ENCODE measurements at regions of chr21 and their contacts with region 1.

Region 1: GRCh38 chr21:42939582-42940410 is 14.4 kb upstream of the ERVH48-1 start:
- DNase-seq: no peak
- H3K4me3 ChIP-seq: no peak overlapping the region
- H3K27ac ChIP-seq: no peak overlapping the region
- H3K4me1 ChIP-seq: peaks cover 0 to 25% (median 12%) of the 10 kb centered on the region in 4 experiments; a peak in 6 of 7 replicates
- H3K27me3 ChIP-seq: no peaks in the 10 kb centered on the region
- CTCF ChIP-seq: no peak
- EP300 ChIP-seq: no peak
- POLR2A ChIP-seq: no peak
- RAD21 ChIP-seq: no peak

Region 2: DNA sequence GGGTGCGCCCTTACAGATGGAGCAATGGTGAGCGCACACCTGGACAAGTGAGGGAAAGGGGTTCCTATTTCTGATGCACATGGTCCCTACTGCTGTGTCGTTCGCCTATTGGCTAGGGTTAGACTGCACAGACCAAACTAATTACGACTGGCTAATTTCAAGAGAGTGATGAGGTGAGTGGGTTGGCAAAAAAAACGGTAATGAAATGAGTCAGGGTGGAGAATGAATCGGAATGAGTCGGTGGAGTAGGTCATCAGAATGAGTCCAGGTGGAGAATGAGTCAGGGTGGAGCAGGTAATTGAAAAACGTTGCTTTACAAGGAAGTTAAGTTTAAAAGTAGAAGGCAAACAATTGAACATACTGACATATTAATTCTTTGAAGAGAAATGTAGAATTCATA is 140.3 kb before region 1 on chr21:
- CTCF ChIA-PET with region 1: no interaction called
- POLR2A ChIA-PET with region 1: no interaction called
- DNase-seq: peak in 1 of 2 experiments; percentile 35
- H3K4me3 ChIP-seq: no peak overlapping the region
- H3K27ac ChIP-seq: no peak overlapping the region
- H3K4me1 ChIP-seq: peaks cover 0 to 5% (median 2%) of the 10 kb centered on the region in 4 experiments; a peak in 4 of 7 replicates
- H3K27me3 ChIP-seq: no peaks in the 10 kb centered on the region; a peak in 1 of 7 replicates
- CTCF ChIP-seq: no peak
- EP300 ChIP-seq: no peak
- POLR2A ChIP-seq: no peak
- RAD21 ChIP-seq: no peak

Region 3: DNA sequence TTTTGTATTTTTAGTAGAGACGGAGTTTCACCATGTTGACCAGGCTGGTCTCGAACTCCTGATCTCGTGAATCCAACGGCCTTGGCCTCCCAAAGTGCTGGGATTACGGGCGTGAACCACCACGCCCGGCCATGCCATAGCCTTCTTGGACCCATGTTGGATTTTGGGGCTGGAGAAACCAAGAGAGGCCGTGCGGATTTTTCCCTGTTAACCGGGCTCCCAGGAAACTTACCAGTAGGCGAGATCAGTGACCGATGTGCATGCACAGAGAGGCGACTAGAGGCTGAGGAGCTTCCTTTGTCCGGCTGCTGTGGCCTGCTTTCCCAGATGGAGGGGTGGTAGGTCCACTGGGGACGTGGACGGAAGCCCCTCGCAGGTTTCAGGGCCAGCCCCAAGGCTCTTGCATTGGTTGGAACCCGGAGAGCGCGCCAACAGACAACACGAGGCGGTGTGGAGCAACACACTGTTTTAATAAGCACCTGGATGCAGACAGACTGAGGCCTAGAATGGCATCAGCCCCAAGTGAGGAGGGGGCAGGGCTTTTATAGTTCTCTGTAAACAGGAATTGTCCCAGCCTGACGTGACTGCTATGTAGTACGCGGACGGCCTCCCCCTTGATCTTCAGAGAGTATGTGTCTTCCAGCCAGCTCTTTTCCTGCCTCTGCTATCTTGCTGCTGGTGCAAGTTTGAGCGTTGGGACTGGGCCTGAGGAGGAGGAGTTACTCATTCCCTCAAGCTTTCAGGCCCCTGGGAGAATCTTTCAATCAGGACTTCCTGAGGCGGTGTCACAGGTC is 14.5 kb before region 1 on chr21 and contains the start of gene ERVH48-1:
- CTCF ChIA-PET with region 1: interaction called, 10 read pairs
- POLR2A ChIA-PET with region 1: interaction called, 12 read pairs
- DNase-seq: no peak
- H3K4me3 ChIP-seq: peak within 1 kb of the TSS in 2 of 4 experiments; percentile 15 to 19; a peak in 3 of 8 replicates
- H3K27ac ChIP-seq: peak within 1 kb of the TSS; percentile 62; the same call in 1 of the 2 replicates
- H3K4me1 ChIP-seq: peaks cover 11 to 18% (median 14%) of the 10 kb centered on the region in 4 experiments
- H3K27me3 ChIP-seq: no peaks in the 10 kb centered on the region
- CTCF ChIP-seq: no peak
- EP300 ChIP-seq: no peak
- POLR2A ChIP-seq: peak in 1 of 2 experiments; percentile 44; a peak in 1 of 3 replicates
- RAD21 ChIP-seq: no peak
- total RNA-seq, gene ERVH48-1: 14.9 and 17.7 TPM in 2 replicates

Region 4: GRCh38 chr21:42956819-42957632 is 17.2 kb after region 1 on chr21:
- CTCF ChIA-PET with region 1: interaction called, 9 read pairs
- POLR2A ChIA-PET with region 1: interaction called, 37 read pairs
- DNase-seq: peak; percentile 67 to 82
- H3K4me3 ChIP-seq: peak overlapping the region in 1 of 4 experiments; percentile 26; a peak in 1 of 8 replicates
- H3K27ac ChIP-seq: peak overlapping the region; percentile 86
- H3K4me1 ChIP-seq: peaks cover 9 to 25% (median 17%) of the 10 kb centered on the region in 4 experiments
- H3K27me3 ChIP-seq: no peaks in the 10 kb centered on the region
- CTCF ChIP-seq: no peak
- EP300 ChIP-seq: peak in 1 of 2 experiments; percentile 9; a peak in 1 of 3 replicates
- POLR2A ChIP-seq: no peak; a peak in 1 of 3 replicates
- RAD21 ChIP-seq: no peak

Measured in H1 (cell line).